Activated CD4-positive, alpha-beta memory T cell treated with anti-CD3 and anti-CD28 coated beads for 36 hours (primary cell): ENCODE measurements at regions of chr9 and their contacts with region 1.

Region 1: DNA sequence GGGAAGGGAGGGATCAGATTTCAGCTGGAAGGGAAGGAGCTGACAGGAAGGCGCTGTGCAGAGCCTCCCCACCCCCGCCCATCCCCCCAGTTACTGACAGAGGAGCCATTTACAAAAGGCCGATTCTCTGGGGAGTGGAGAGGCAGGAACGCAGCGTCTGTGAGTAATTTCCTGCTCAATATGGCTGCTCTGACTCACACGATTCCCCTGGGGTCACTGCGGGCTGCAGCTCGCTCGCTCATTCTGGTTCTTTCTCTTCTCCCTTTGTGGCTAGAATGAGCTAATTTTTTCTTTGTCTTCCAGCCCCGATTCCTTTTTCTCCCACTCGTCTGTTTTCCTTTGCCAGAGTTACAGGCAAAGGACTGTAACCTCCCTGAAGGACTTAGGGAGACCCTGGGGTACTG is 28.8 kb downstream of the PTPA start:
- DNase-seq: peak; percentile 91
- H3K4me3 Mint-ChIP-seq: peak overlapping the region; percentile 64
- H3K27ac Mint-ChIP-seq: peak overlapping the region; percentile 91
- H3K4me1 Mint-ChIP-seq: peaks cover 37% of the 10 kb centered on the region
- H3K27me3 Mint-ChIP-seq: no peaks in the 10 kb centered on the region

Region 2: DNA sequence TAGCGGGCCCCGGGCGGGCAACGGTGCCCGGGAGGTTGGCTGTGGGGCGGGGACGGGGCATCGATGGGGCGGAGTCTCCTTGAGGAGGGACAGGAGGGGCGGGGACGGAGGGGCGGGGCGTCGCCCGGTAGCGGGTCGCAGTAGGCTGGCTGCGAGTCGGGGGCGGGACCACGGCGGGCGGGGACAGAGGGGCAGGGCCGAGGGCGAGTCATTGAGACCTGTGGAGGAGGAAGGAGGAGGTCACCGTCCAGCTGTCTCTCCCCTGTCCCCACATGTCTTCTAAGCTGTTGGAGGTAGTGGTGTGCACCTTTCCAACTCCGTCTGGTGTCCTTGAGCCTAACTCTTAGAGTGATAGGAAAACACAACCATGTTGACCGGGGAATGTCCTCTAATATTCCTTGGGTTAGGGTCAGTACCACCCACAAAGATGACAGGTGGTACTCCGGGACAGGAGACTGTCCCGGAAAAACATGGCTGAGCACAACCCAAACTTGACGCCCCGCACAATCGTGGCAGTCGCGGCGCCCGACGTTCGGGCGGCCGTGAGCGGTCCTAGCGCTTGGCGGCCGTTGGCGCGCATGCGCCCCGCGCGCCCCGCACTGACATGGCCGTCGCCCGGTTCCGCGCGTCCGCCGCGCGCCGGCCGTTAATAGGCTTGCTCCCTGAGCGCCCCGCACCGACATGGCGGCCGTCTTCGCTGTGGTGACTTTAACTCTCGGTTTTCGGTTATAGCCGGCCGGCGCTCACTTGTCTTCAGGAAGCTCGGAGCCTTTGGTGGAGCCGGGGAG is 29.1 kb before region 1 on chr9 and contains the starts of genes CRAT and PTPA:
- CTCF ChIA-PET with region 1: interaction called, 17 read pairs
- POLR2A ChIA-PET with region 1: interaction called, 5 read pairs
- intact Hi-C with region 1: no loop called
- DNase-seq: peak; percentile 98
- H3K4me3 Mint-ChIP-seq: peak within 1 kb of the TSS; percentile 94
- H3K27ac Mint-ChIP-seq: peak within 1 kb of the TSS; percentile 97
- H3K4me1 Mint-ChIP-seq: peaks cover 34% of the 10 kb centered on the region
- H3K27me3 Mint-ChIP-seq: no peaks in the 10 kb centered on the region
- total RNA-seq, gene CRAT: 16.0 to 16.4 TPM
- total RNA-seq, gene PTPA: 74.6 to 76.3 TPM

Region 3: GRCh38 chr9:129154866-129155477 is 15.0 kb after region 1 on chr9:
- CTCF ChIA-PET with region 1: interaction called, 25 read pairs
- POLR2A ChIA-PET with region 1: interaction called, 6 read pairs
- intact Hi-C with region 1: no loop called
- DNase-seq: no peak
- H3K4me3 Mint-ChIP-seq: no peak overlapping the region
- H3K27ac Mint-ChIP-seq: no peak overlapping the region
- H3K4me1 Mint-ChIP-seq: no peaks in the 10 kb centered on the region
- H3K27me3 Mint-ChIP-seq: no peaks in the 10 kb centered on the region

Region 4: DNA sequence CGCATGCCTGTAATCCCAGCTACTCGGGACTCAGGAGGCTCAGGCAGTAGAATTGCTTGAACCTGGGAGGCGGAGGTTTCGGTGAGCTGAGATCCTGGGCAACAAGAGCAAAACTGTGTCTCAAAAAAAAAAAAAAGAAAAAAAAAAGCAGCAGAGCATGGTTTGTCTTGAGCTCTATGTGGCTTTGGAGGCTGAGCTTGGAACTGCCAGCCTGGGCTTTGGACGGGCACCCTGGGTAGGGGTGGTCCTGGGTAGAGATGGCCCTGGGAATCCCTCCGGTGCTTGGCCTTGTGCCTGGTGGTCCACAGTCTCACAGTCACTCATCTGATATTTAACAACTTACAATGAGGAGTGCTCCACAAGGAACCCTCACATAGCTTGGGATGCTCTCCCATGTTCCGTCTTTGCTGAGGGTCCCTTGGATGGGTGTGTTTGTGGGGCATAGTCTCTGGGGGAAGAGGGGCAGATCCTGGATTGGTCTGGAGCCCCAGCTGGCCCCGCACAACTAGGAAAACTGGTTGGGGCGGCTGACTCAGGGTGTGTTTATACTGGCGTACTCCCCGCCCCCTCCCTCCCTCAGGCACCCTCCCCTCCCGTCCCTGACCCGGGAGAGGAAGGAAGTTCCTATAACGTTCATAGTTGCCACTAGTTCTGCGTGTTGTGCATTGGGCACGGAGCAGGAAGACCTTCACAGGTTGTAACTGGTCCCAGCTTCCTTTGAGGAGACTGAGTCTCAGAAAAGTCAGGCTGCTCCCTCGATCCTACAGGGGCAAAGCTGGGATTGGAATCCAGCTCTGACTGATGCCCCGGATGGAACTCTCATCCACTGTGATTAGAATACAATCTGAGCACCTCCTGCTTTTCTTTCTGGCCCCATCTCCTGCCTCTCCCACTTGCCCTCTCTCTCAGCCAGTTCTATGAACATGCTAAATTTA is 26.9 kb after region 1 on chr9:
- CTCF ChIA-PET with region 1: interaction called, 119 read pairs
- POLR2A ChIA-PET with region 1: no interaction called
- intact Hi-C with region 1: no loop called
- DNase-seq: peak; percentile 48
- H3K4me3 Mint-ChIP-seq: peak overlapping the region; percentile 23
- H3K27ac Mint-ChIP-seq: no peak overlapping the region
- H3K4me1 Mint-ChIP-seq: peaks cover 20% of the 10 kb centered on the region
- H3K27me3 Mint-ChIP-seq: no peaks in the 10 kb centered on the region

Region 5: GRCh38 chr9:129237195-129237611 is 97.2 kb after region 1 on chr9:
- CTCF ChIA-PET with region 1: interaction called, 10 read pairs
- POLR2A ChIA-PET with region 1: no interaction called
- intact Hi-C with region 1: loop called (anchors 1 kb)
- DNase-seq: peak; percentile 77
- H3K4me3 Mint-ChIP-seq: peak overlapping the region; percentile 68
- H3K27ac Mint-ChIP-seq: peak overlapping the region; percentile 88
- H3K4me1 Mint-ChIP-seq: peaks cover 49% of the 10 kb centered on the region
- H3K27me3 Mint-ChIP-seq: no peaks in the 10 kb centered on the region

Region 6: GRCh38 chr9:129495534-129496325 is 355.7 kb after region 1 on chr9:
- CTCF ChIA-PET with region 1: interaction called, 14 read pairs
- POLR2A ChIA-PET with region 1: no interaction called
- intact Hi-C with region 1: no loop called
- DNase-seq: peak; percentile 91
- H3K4me3 Mint-ChIP-seq: peak overlapping the region; percentile 72
- H3K27ac Mint-ChIP-seq: peak overlapping the region; percentile 73
- H3K4me1 Mint-ChIP-seq: peaks cover 42% of the 10 kb centered on the region
- H3K27me3 Mint-ChIP-seq: no peaks in the 10 kb centered on the region

Region 7: DNA sequence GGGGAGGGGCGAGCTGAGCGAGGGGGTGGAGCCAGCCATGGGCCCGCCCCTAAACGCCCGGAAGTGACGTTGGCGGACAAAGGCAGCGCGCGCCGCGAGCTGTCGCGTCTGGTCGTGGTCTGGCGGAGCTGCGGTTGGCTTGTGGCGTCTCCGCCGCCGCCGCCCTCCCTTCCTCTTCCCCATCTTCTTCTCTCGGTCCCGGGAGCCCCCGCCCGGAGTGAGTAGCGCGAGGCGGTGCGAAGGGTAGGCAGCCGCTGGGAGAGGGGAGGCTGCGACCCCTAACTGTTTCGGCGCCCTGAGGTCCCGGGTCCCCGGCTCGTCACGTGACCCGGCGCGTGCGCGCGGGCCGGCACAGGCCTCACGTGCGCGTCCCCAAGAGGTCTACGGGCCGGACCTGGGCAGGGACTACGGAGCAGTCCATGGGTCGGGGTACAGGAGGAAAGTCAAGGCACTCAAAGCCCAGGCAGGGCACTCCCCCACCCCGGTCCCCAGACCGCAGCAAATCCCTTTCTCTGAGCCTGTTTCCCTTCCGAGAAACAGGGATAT is 486.2 kb after region 1 on chr9 and contains the start of gene NTMT1:
- CTCF ChIA-PET with region 1: interaction called, 147 read pairs
- POLR2A ChIA-PET with region 1: interaction called, 6 read pairs
- intact Hi-C with region 1: loop called (anchors 1 kb)
- DNase-seq: peak; percentile 95
- H3K4me3 Mint-ChIP-seq: peak within 1 kb of the TSS; percentile 77
- H3K27ac Mint-ChIP-seq: peak within 1 kb of the TSS; percentile 91
- H3K4me1 Mint-ChIP-seq: peaks cover 58% of the 10 kb centered on the region
- H3K27me3 Mint-ChIP-seq: peaks cover 9% of the 10 kb centered on the region
- total RNA-seq, gene NTMT1: 59.9 to 64.6 TPM